Left ventricle myocardium superior (tissue), 1 donor: ENCODE measurements at regions of chr5 and their contacts with region 1.

Region 1: GRCh38 chr5:15794052-15794985 is 294.3 kb downstream of the FBXL7 start:
- DNase-seq: no peak
- ATAC-seq: no peak

Region 2: GRCh38 chr5:15499528-15500324 is 294.6 kb before region 1 on chr5 and contains the start of gene FBXL7:
- intact Hi-C with region 1: loop called (anchors 10 kb)
- DNase-seq: peak; percentile 92
- ATAC-seq: peak; percentile 91
- total RNA-seq, gene FBXL7: 21.6 TPM

Region 3: DNA sequence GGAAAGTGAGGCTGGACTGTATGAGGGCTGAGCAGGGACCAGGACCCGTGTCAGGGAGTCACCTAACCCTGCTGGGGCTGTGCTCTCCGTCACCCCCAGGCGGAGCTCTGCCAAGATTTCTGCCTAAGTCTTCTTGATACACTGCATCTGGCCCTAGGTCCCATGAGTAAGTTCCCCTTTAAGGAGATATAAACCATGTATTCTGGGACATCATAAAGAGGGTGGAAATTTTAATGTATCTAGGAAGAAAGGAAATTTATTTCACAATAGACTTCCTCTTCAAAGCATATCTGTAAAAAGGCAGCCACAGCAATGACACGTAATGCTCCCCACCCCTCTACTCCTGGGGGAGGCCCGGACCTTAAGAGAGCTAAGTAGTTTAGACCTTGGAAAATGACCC is 111.0 kb before region 1 on chr5:
- intact Hi-C with region 1: no loop called
- DNase-seq: peak; percentile 45
- ATAC-seq: peak; percentile 82

Region 4: DNA sequence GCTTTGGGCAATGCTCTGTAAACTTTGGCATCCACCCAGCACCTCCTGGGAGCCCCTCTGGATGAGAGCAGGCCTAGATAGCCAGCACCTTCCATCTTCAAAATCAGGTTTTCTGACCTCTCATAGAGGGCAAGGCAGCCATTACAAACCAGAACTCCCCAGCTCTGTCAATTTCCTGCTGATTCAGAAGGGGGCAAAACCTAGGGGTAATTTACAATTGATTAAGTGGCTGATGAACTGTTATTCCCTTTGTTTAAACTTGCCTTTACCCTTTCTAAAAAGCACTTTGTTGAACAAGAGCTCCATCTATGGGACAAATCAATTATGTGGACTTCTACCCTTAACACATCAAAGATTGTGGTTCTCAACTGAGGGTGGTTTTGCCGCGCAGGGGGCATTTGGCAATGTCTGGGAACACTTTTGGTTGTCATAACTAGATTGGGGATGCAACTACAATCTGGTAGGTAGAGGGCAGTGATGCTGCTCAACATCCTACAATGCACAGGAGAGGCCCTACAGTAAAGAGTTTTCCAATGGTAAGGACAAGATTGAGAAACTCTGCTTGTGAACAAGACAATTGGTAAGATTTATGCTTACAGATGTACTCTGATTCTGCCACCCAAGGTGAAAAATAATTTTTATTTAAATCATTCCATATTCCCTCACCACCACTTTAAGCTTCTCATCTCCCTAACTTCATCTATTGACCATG is 201.2 kb after region 1 on chr5:
- intact Hi-C with region 1: no loop called
- DNase-seq: no peak
- ATAC-seq: peak; percentile 70